ENCODE measurements at regions of chr9 and their contacts with region 1.

Region 1: GRCh38 chr9:119556129-119556875 is 187.1 kb upstream of the BRINP1 start:
- DNase-seq: peak; percentile 81
- H3K4me3 ChIP-seq: peak overlapping the region in 3 of 4 donors; percentile 15 to 33 (median 19)
- H3K27ac ChIP-seq: peak overlapping the region in 1 of 4 donors; percentile 8
- H3K4me1 ChIP-seq: peaks cover 0 to 9% (median 2%) of the 10 kb centered on the region in 4 donors
- H3K27me3 ChIP-seq: no peaks in the 10 kb centered on the region
- CTCF ChIP-seq: peak; percentile 77 to 90 (median 85)
- EP300 ChIP-seq: no peak
- POLR2A ChIP-seq: no peak

Region 2: GRCh38 chr9:120477521-120478001 is 921.3 kb after region 1 on chr9:
- in situ Hi-C with region 1: loop called in 3 of 4 experiments (anchors 25 kb)
- intact Hi-C with region 1: no loop called
- DNase-seq: peak; percentile 53
- H3K4me3 ChIP-seq: no peak overlapping the region
- H3K27ac ChIP-seq: peak overlapping the region in 2 of 4 donors; percentile 1 to 53
- H3K4me1 ChIP-seq: peaks cover 0 to 13% (median 9%) of the 10 kb centered on the region in 4 donors
- H3K27me3 ChIP-seq: no peaks in the 10 kb centered on the region
- CTCF ChIP-seq: peak; percentile 79 to 89 (median 82)
- EP300 ChIP-seq: no peak
- POLR2A ChIP-seq: no peak

Measured in transverse colon (tissue), 4 donors.